HEK293 (cell line): ENCODE measurements at regions of chr15 and their contacts with region 1.

Region 1: GRCh38 chr15:80367094-80367493 is 37.1 kb upstream of the ARNT2 start:
- H3K4me3 ChIP-seq: no peak overlapping the region
- H3K27ac ChIP-seq: no peak overlapping the region
- H3K4me1 ChIP-seq: no peaks in the 10 kb centered on the region
- CTCF ChIP-seq: no peak

Region 2: GRCh38 chr15:80026754-80027153 is 340.3 kb before region 1 on chr15:
- CTCF ChIA-PET with region 1: no interaction called
- POLR2A ChIA-PET with region 1: no interaction called
- H3K4me3 ChIP-seq: no peak overlapping the region
- H3K27ac ChIP-seq: no peak overlapping the region
- H3K4me1 ChIP-seq: no peaks in the 10 kb centered on the region
- CTCF ChIP-seq: no peak

Region 3: GRCh38 chr15:80379693-80380092 is 12.6 kb after region 1 on chr15:
- CTCF ChIA-PET with region 1: interaction called, 11 read pairs
- POLR2A ChIA-PET with region 1: no interaction called
- H3K4me3 ChIP-seq: no peak overlapping the region
- H3K27ac ChIP-seq: no peak overlapping the region
- H3K4me1 ChIP-seq: no peaks in the 10 kb centered on the region
- CTCF ChIP-seq: no peak